Activated naive CD4-positive, alpha-beta T cell treated with anti-CD3 and anti-CD28 coated beads for 36 hours (primary cell): ENCODE measurements at regions of chr7 and their contacts with region 1.

Region 1: GRCh38 chr7:17159500-17160037 is 138.9 kb upstream of the AHR start:
- DNase-seq: peak; percentile 45
- H3K4me3 Mint-ChIP-seq: no peak overlapping the region
- H3K27ac Mint-ChIP-seq: peak overlapping the region; percentile 76
- H3K4me1 Mint-ChIP-seq: peaks cover 21% of the 10 kb centered on the region
- H3K27me3 Mint-ChIP-seq: peaks cover 2% of the 10 kb centered on the region

Region 2: DNA sequence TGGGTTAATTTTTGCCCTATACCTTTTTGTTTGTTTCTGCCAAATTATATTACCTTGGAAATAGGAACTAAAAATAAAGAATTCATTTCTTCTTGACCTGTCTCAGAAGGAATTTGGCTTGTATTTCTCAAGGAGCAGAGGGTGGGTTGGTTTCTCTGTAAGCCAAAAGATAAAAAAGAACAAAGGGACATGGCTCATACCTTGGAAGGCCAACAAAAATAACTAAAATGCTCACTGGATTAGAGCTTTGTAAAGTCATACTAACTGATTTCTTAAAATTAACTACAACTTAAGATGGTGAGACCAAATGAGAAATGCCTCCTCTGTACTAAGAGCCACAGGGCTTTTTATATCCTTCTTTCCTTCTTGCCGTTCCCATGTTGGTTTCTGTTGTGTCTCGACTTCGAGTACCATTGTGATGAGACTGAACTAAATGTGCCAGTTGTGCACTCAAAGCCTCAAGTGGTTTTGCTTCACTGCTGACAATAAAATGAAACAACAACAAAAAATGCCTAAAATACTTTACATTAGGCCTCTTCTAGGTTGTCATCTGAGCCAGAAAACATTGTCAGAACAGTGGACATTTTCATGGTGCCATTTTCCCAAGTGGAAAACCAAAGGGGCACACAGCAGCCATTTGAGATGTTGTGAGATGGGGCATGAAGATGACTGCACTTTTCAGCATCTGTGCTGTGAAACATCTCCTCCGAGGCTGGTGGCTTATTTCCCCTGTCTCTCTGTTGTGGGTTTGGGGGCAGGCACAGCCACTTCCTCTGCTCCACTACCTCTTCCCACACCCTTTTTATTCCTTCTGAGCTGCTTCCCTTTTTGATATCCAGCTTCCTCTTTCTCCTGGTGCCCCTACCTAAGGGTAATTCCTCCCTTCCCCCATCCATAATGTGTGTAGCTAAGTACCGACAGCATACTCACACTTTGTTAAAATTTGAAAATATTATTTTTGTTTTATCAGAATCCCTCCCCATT is 226.0 kb before region 1 on chr7:
- CTCF ChIA-PET with region 1: no interaction called
- intact Hi-C with region 1: loop called (anchors 2 kb)
- DNase-seq: peak; percentile 35
- H3K4me3 Mint-ChIP-seq: no peak overlapping the region
- H3K27ac Mint-ChIP-seq: no peak overlapping the region
- H3K4me1 Mint-ChIP-seq: peaks cover 48% of the 10 kb centered on the region
- H3K27me3 Mint-ChIP-seq: peaks cover 2% of the 10 kb centered on the region

Region 3: DNA sequence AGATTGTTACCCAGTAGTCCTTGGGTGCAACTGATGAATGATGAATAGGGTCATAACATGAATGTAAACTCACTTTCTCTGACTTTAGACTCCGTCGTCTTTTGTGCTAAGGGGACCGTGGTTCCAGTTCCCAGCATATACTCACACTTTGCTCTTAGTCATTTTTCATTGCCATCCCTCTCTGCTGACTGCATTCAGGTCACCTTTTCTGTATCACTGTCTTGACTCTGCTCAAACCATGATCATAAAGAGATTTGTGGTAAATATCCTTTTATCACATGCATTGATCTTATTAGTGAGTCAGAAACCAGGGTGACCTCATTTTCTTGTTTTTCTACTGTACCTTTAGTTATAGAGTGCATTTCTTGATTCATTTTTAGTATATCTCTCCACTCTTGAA is 136.6 kb before region 1 on chr7:
- CTCF ChIA-PET with region 1: no interaction called
- intact Hi-C with region 1: loop called (anchors 1 kb)
- DNase-seq: peak; percentile 49
- H3K4me3 Mint-ChIP-seq: no peak overlapping the region
- H3K27ac Mint-ChIP-seq: no peak overlapping the region
- H3K4me1 Mint-ChIP-seq: peaks cover 10% of the 10 kb centered on the region
- H3K27me3 Mint-ChIP-seq: peaks cover 8% of the 10 kb centered on the region

Region 4: DNA sequence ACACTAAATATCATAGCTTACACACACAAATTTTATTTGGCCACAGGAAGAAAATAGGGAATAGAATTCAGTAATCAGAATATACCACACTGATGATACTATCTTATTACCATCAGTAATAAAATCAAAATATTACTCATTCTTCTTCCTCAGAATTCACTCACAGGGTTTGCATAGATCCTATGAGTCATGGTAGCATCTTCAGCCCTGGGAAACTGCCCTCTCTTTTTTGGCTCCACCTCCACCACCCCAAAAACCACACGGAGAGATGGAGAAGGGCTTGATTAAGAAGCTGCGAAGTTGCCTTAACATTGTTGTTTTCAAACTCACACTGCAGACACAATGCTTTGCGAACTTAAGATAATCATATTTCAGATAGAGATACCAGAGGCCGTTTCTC is 15.2 kb before region 1 on chr7:
- CTCF ChIA-PET with region 1: no interaction called
- intact Hi-C with region 1: loop called (anchors 1 kb)
- DNase-seq: peak; percentile 70
- H3K4me3 Mint-ChIP-seq: peak overlapping the region; percentile 28
- H3K27ac Mint-ChIP-seq: no peak overlapping the region
- H3K4me1 Mint-ChIP-seq: peaks cover 51% of the 10 kb centered on the region
- H3K27me3 Mint-ChIP-seq: no peaks in the 10 kb centered on the region

Region 5: DNA sequence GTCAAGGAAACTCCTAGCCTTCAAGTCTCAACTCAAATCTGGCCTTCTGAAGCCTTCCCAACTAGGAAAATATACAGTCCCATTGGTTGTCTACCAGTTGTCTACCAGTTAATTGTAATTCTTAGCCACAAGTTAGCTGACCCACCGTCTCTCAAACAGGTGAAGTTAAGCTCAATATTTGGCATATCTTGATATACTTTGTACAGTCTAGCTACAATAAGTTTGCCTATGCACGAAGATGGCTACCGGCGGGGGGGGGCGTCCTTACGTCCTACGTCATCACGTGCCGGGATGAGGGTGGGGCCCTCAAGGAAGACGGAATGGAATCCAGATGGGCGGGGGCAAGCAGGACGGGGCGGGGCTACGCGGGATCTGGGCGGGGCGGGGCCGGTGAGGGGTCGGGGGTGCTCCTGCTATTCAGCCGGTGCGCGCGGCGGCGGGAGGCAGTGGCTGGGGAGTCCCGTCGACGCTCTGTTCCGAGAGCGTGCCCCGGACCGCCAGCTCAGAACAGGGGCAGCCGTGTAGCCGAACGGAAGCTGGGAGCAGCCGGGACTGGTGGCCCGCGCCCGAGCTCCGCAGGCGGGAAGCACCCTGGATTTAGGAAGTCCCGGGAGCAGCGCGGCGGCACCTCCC is 138.8 kb after region 1 on chr7 and contains the start of gene AHR:
- CTCF ChIA-PET with region 1: interaction called, 5 read pairs
- intact Hi-C with region 1: loop called (anchors 1 kb)
- DNase-seq: peak; percentile 97
- H3K4me3 Mint-ChIP-seq: peak within 1 kb of the TSS; percentile 92
- H3K27ac Mint-ChIP-seq: peak within 1 kb of the TSS; percentile 91
- H3K4me1 Mint-ChIP-seq: peaks cover 25% of the 10 kb centered on the region
- H3K27me3 Mint-ChIP-seq: no peaks in the 10 kb centered on the region
- total RNA-seq, gene AHR: 24.5 to 27.5 TPM

Region 6: DNA sequence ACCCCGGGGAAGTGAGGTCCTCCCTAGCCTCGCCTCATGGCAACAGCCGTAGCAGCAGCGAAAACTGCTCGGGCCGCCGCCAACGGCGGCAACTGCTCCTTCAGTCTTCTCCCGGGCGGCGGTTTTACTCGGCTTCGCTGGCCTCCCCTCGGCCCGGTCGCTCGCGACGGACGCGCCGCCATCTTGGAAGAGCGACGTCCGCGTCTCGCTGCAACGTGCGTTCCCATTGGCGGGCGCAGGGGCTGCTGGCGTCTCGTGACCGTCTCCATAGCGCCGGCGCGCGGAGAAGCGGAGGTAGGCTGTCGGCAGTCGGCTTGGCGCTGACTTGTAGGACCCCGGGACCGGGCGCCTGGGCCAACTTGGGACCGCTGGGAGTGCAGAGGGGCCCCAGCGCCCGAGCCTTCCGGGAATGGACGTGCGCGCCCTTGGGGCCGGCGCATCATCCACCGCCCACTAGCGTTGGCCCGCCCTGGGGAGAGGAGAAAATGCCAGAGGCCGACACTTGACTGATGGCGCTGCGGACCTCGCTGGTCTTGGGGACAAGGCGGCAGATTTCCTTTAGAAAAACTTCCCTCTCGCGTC is 780.8 kb after region 1 on chr7 and contains the start of gene SNX13:
- CTCF ChIA-PET with region 1: no interaction called
- intact Hi-C with region 1: loop called (anchors 5 kb)
- DNase-seq: peak; percentile 91
- H3K4me3 Mint-ChIP-seq: peak within 1 kb of the TSS; percentile 99
- H3K27ac Mint-ChIP-seq: peak within 1 kb of the TSS; percentile 92
- H3K4me1 Mint-ChIP-seq: peaks cover 41% of the 10 kb centered on the region
- H3K27me3 Mint-ChIP-seq: no peaks in the 10 kb centered on the region
- total RNA-seq, gene SNX13: 19.5 to 20.3 TPM